ENCODE measurements at regions of chr1 and their contacts with region 1.

Region 1: GRCh38 chr1:203006948-203007871 is at the start of gene TMEM183A:
- DNase-seq: peak; percentile 92 to 96 (median 93)
- H3K4me3 ChIP-seq: peak within 1 kb of the TSS; percentile 75 to 97
- H3K4me3 Mint-ChIP-seq: peak within 1 kb of the TSS; percentile 91 to 99 (median 94)
- H3K27ac ChIP-seq: peak within 1 kb of the TSS; percentile 93
- H3K27ac Mint-ChIP-seq: peak within 1 kb of the TSS; percentile 97 to 99 (median 98)
- H3K4me1 ChIP-seq: peaks cover 32% of the 10 kb centered on the region
- H3K4me1 Mint-ChIP-seq: peaks cover 18 to 46% (median 33%) of the 10 kb centered on the region in 4 donors
- H3K27me3 ChIP-seq: no peaks in the 10 kb centered on the region
- H3K27me3 Mint-ChIP-seq: no peaks in the 10 kb centered on the region
- total RNA-seq, gene TMEM183A: 69.3 to 70.3 TPM

Region 2: DNA sequence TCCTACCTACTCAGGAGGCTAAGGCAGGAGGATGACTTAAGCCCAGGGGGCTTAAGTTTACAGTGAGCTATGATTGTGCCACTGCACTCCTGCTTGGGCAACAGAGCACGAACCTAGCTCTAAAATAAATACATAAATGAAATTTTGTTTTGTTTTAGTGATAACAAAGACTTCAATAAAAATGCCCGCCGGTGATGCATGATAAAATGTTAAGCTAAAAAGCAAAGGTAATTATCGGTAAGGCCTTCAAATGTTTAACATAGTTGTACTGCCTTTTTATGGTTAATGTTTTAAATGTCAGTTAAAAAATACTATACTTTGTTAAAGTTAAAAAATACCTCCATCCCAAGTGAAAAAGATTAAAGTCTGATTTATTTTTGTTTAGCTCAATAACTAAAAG is 226.0 kb before region 1 on chr1:
- CTCF ChIA-PET with region 1: no interaction called
- POLR2A ChIA-PET with region 1: no interaction called
- intact Hi-C with region 1: no loop called
- DNase-seq: no peak
- H3K4me3 ChIP-seq: no peak overlapping the region
- H3K4me3 Mint-ChIP-seq: no peak overlapping the region
- H3K27ac ChIP-seq: no peak overlapping the region
- H3K27ac Mint-ChIP-seq: no peak overlapping the region
- H3K4me1 ChIP-seq: peaks cover 7% of the 10 kb centered on the region
- H3K4me1 Mint-ChIP-seq: peaks cover 14 to 28% (median 22%) of the 10 kb centered on the region in 4 donors
- H3K27me3 ChIP-seq: no peaks in the 10 kb centered on the region
- H3K27me3 Mint-ChIP-seq: no peaks in the 10 kb centered on the region

Region 3: GRCh38 chr1:202810615-202811295 is 196.5 kb before region 1 on chr1 and contains the start of gene PCAT6:
- CTCF ChIA-PET with region 1: no interaction called
- POLR2A ChIA-PET with region 1: no interaction called
- intact Hi-C with region 1: loop called (anchors 5 kb)
- DNase-seq: peak; percentile 82 to 88 (median 83)
- H3K4me3 ChIP-seq: peak within 1 kb of the TSS; percentile 88 to 93
- H3K4me3 Mint-ChIP-seq: peak within 1 kb of the TSS; percentile 89 to 97 (median 94)
- H3K27ac ChIP-seq: peak within 1 kb of the TSS; percentile 49
- H3K27ac Mint-ChIP-seq: peak within 1 kb of the TSS; percentile 71 to 96 (median 92)
- H3K4me1 ChIP-seq: peaks cover 36% of the 10 kb centered on the region
- H3K4me1 Mint-ChIP-seq: peaks cover 26 to 45% (median 35%) of the 10 kb centered on the region in 4 donors
- H3K27me3 ChIP-seq: no peaks in the 10 kb centered on the region
- H3K27me3 Mint-ChIP-seq: peaks cover 0 to 1% of the 10 kb centered on the region in 2 donors
- total RNA-seq, gene PCAT6: not detected

Region 4: DNA sequence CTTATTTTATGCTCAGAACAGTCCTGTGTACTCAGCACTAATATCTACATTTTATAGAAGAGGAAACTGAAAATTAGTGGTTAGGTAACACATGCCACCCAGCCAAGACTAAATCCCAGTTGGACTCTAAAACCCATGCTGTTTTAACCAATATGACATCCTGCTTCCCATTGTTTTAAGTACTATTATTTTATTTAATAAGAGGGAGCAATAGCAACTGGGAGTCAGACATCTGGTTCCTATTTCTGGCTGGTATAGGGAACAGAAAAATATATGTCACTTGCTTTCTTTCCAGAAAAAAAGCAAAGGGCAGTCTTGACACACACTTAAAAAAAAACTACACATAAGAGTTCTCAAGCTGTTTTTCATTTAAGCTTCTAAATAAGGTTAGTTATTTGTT is 92.1 kb before region 1 on chr1:
- CTCF ChIA-PET with region 1: no interaction called
- POLR2A ChIA-PET with region 1: no interaction called
- intact Hi-C with region 1: no loop called
- DNase-seq: no peak
- H3K4me3 ChIP-seq: no peak overlapping the region
- H3K4me3 Mint-ChIP-seq: no peak overlapping the region
- H3K27ac ChIP-seq: no peak overlapping the region
- H3K27ac Mint-ChIP-seq: no peak overlapping the region
- H3K4me1 ChIP-seq: no peaks in the 10 kb centered on the region
- H3K4me1 Mint-ChIP-seq: peaks cover 3 to 10% (median 6%) of the 10 kb centered on the region in 4 donors
- H3K27me3 ChIP-seq: no peaks in the 10 kb centered on the region
- H3K27me3 Mint-ChIP-seq: no peaks in the 10 kb centered on the region

Region 5: DNA sequence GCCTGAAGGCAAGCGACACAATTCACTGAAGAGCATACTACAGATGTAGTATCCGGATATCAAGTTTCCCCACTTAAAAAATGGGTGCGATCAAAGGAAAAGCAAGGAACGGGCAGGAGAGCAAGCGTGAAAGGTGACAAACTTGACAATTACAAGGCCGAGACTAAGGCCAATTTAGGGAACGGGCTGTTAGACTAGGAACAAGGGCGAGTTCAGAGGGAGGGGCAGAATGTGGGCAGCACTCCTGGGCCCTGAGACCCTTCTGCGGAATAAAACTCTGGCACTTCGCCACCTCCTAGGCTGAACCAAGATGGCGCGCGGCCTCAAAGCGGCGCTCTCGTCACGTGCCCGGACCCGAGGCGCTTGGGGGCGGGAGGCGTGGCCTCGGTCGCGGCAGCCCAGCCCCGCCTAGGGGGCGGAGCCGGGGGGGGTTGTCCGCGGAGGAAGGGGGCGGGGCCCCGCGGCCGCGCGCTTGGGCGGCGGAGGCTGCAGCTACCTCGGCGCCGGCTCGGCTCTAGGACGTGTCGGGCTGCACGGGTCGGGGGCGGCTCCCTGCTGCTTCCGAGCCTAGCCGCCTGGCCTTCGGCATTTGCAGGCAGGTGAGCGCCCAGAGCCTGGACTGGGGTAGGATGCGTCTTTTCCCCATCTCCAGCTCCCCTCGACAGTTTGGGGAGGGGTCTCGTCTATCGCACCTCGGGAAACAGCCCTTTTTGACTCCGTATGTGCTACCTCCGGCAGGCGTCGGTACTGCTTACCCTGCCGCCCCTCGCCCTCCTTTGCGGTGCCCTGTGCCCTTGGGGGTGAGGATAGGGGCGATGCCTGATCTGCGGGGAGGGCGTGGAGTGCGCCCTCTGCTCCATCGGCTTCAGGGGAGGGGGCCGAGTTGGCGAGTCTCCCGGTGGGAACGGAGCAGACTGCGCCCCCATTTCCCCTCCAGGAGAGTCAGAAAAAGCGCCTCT is 19.1 kb after region 1 on chr1 and contains the start of gene PPFIA4:
- CTCF ChIA-PET with region 1: no interaction called
- POLR2A ChIA-PET with region 1: interaction called, 49 read pairs
- intact Hi-C with region 1: loop called (anchors 1 kb)
- DNase-seq: peak; percentile 76 to 90 (median 85)
- H3K4me3 ChIP-seq: peak within 1 kb of the TSS; percentile 60 to 81
- H3K4me3 Mint-ChIP-seq: peak within 1 kb of the TSS; percentile 79 to 86 (median 81)
- H3K27ac ChIP-seq: peak within 1 kb of the TSS; percentile 46
- H3K27ac Mint-ChIP-seq: peak within 1 kb of the TSS; percentile 65 to 90 (median 80)
- H3K4me1 ChIP-seq: peaks cover 13% of the 10 kb centered on the region
- H3K4me1 Mint-ChIP-seq: peaks cover 4 to 16% (median 11%) of the 10 kb centered on the region in 4 donors
- H3K27me3 ChIP-seq: no peaks in the 10 kb centered on the region
- H3K27me3 Mint-ChIP-seq: peaks cover 0 to 2% of the 10 kb centered on the region in 2 donors
- total RNA-seq, gene PPFIA4: 1.4 to 1.5 TPM